HEK293T (cell line): ENCODE measurements at regions of chr6 and their contacts with region 1.

Region 1: DNA sequence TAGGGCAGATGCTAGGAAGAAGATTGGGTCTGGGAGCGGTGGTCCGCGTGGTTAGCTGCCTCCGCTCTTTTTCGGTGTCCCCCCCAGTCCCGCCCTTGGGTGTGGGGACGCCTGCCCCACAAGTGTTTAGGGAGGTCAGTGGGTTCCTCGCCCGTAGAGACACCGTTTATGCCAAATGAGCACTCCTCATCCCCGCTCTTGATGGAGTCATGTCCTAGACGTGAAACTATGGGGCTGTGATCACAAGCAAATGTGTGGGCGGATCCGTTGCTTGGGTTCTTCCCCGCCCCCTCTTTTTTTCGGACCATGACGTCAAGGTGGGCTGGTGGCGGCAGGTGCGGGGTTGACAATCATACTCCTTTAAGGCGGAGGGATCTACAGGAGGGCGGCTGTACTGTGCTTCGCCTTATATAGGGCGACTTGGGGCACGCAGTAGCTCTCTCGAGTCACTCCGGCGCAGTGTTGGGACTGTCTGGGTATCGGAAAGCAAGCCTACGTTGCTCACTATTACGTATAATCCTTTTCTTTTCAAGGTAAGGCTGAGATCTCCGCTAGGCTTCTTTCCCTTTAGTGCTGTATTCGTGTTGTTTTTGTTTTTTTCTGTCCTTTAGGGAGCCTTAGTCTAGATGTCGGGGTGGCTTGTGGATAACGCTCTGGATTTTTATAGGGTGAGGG is at the start of gene HSP90AB1:
- DNase-seq: peak; percentile 90

Region 2: GRCh38 chr6:44161997-44162338 is 84.8 kb before region 1 on chr6:
- CTCF ChIA-PET with region 1: no interaction called
- POLR2A ChIA-PET with region 1: interaction called, 16 read pairs
- DNase-seq: no peak

Region 3: DNA sequence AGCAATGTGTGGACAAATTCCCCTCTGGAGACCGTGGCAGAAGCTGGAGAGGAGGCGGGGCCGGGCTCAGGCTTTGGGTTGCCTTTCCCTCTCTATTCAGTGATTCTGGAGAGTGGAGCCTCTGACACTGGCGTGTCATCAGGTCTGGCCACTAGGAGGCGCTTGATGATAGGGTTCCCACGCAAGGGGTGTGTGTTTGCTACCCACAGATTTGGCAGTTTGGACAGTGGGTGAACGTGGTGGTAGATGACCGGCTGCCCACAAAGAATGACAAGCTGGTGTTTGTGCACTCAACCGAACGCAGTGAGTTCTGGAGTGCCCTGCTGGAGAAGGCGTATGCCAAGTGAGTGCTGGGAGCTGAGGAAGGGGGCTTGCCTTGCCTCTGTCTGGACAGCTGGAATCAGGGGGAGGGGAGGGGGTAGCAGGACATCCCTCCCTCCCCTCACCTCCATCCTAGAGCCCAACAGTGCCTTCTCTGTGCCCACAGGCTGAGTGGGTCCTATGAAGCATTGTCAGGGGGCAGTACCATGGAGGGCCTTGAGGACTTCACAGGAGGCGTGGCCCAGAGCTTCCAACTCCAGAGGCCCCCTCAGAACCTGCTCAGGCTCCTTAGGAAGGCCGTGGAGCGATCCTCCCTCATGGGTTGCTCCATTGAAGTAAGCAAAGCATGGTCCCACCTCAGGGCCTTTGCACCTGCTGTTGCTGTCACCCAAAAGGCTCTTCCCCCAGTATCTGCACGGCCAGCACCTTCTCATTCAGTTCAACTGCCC is 73.9 kb before region 1 on chr6:
- CTCF ChIA-PET with region 1: interaction called, 3 read pairs
- POLR2A ChIA-PET with region 1: interaction called, 16 read pairs
- DNase-seq: peak; percentile 88

Region 4: GRCh38 chr6:44180886-44181285 is 65.9 kb before region 1 on chr6:
- CTCF ChIA-PET with region 1: no interaction called
- POLR2A ChIA-PET with region 1: interaction called, 11 read pairs
- DNase-seq: no peak

Region 5: DNA sequence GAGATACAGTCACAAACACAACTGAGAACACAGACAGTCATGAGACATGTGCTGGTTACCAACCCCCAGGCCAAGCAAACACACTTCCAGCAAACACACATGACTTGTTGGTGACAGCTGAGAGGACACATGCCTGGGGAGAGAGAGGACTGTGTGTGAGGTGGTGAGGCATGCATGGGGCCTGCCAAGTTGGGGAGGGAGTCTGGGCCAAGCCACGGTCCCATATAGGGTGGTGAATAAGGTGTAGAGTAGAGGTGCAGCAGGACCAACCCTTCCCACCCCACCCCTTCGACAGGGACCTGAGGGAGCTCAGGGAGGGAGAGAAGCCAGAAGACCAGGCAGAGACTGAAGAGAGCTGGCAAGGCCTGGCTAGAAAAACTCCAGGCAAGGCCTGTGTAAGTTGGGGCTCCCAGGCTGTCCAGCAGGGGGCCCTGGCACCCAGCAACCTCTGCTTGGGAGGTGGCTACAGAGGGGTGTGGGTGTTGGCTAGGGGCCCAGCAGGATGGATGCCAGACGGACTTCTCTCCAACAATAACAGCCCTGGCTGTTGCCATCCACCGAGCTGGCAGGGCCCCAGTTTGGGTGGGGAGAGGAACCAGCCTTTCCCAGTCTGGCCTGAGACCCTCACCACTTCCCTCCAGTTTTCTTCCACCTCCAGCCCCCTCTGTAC is 25.4 kb before region 1 on chr6:
- CTCF ChIA-PET with region 1: interaction called, 3 read pairs
- POLR2A ChIA-PET with region 1: interaction called, 65 read pairs
- DNase-seq: peak; percentile 37

Region 6: DNA sequence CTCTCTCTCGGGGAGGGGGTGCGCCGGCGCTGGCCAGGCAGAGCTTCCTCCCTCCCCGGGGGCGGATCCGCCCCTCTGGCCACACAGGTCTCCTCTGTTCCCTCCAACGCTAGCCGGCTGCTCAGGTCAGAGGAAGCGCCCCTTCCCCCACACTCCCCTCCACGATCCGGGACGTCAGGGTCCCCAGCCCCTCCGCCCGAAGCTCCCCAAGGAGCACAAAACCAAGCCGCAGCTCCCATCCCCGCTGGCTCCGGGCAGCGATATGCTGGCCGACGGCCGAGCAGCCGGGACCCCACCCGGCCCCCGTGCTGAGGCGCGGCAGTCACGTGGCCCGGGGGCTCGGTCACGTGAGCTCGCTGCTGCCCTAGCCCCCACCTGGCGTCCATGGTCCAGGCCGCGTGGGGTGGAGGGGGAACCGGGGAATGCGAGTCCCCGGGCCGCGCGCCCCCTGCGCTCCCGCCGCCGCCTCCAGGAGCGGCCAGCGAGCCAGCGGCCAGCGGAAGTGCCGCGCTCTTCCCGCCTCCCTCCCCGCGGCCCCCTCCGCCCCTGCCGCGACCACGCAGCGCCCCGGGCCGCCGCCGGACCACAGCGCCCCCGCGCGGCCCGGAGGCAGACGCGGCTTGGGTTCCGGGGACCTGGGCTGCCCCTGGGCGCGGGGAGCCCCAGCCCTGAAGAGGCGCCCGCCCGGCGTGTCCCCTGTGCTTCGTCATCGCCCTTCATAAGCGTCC is 10.4 kb after region 1 on chr6 and contains the start of gene SLC35B2:
- CTCF ChIA-PET with region 1: interaction called, 9 read pairs
- POLR2A ChIA-PET with region 1: interaction called, 117 read pairs
- DNase-seq: peak; percentile 78

Region 7: GRCh38 chr6:44265007-44265721 is 18.4 kb after region 1 on chr6 and contains the start of gene NFKBIE:
- CTCF ChIA-PET with region 1: interaction called, 3 read pairs
- POLR2A ChIA-PET with region 1: interaction called, 22 read pairs
- DNase-seq: peak; percentile 93